K562 (cell line): ENCODE measurements at regions of chr2 and their contacts with region 1.

Region 1: GRCh38 chr2:101556033-101556459 is 81.1 kb upstream of the RFX8 start:
- DNase-seq: no peak
- ATAC-seq: no peak
- H3K4me3 ChIP-seq: no peak overlapping the region
- H3K27ac ChIP-seq: no peak overlapping the region
- H3K4me1 ChIP-seq: no peaks in the 10 kb centered on the region; a peak in 1 of 5 replicates
- H3K27me3 ChIP-seq: peaks cover 15 to 51% of the 10 kb centered on the region in 2 experiments; a peak in 4 of 5 replicates
- CTCF ChIP-seq: no peak
- EP300 ChIP-seq: no peak
- POLR2A ChIP-seq: no peak
- RAD21 ChIP-seq: no peak

Region 2: DNA sequence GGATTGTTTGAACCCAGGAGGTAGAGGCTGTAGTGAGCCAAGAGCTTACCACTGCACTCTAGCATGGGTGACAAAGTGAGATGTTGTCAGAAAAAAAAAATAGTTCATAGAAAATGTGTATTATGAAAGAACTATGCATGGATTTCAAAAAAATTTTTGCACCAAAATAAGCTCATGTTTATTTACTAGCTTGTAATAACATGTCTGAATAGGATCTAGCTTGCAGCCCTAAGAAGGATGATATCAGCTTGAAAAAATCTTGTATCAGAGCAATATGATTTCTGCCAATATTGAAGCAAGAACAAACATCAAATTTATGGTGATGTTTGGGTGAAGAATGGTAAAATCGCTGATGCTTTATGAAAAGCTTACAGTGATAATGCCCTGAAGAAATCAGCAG is 15.9 kb after region 1 on chr2:
- CTCF ChIA-PET with region 1: no interaction called
- POLR2A ChIA-PET with region 1: interaction called, 3 read pairs
- in situ Hi-C with region 1: no loop called
- intact Hi-C with region 1: loop called (anchors 2 kb)
- DNase-seq: no peak
- ATAC-seq: no peak
- H3K4me3 ChIP-seq: no peak overlapping the region
- H3K27ac ChIP-seq: no peak overlapping the region
- H3K4me1 ChIP-seq: no peaks in the 10 kb centered on the region; a peak in 1 of 5 replicates
- H3K27me3 ChIP-seq: peaks cover 0 to 3% of the 10 kb centered on the region in 2 experiments; a peak in 3 of 5 replicates
- CTCF ChIP-seq: no peak
- EP300 ChIP-seq: no peak
- POLR2A ChIP-seq: no peak
- RAD21 ChIP-seq: no peak

Region 3: GRCh38 chr2:101658387-101658786 is 102.3 kb after region 1 on chr2:
- CTCF ChIA-PET with region 1: no interaction called
- POLR2A ChIA-PET with region 1: no interaction called
- in situ Hi-C with region 1: no loop called
- intact Hi-C with region 1: no loop called
- DNase-seq: no peak
- ATAC-seq: no peak
- H3K4me3 ChIP-seq: no peak overlapping the region
- H3K27ac ChIP-seq: no peak overlapping the region
- H3K4me1 ChIP-seq: peaks cover 6% of the 10 kb centered on the region in 2 experiments; a peak in 2 of 5 replicates
- H3K27me3 ChIP-seq: no peaks in the 10 kb centered on the region
- CTCF ChIP-seq: no peak
- EP300 ChIP-seq: no peak
- POLR2A ChIP-seq: no peak
- RAD21 ChIP-seq: no peak